ENCODE measurements at regions of chr2 and their contacts with region 1.

Region 1: DNA sequence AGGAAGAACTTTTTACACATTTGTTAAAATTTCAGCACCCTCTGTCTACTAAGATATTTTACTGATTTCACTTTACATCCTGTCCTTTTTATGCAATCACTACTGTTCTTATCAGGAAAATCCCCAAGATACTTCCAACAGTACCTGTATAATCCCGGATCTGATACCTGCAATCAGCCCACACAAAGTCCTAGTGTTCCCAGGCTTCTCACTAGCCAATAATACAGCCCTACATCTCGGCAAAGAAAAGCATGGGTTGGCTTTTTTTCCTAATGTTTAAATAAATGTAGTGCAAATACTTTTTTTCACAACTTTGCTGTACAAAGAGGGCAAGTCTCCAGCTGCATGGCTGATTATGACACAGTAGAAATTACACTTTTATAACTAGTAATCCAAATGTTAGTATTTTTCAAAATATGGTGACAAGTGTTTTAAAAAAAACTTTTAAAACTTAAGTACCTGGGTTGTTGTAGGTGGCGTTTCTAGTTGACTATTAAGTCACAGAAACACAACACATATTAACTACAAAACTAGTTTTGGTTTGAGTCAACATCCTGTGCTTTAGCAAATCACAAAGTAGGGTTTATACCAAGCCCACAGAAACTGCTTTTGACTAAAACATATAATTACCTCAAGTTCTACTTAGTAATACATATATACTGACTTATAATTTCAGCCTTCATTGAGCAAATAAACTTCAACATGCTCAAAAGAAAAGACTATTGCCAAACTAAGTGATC is 19.5 kb downstream of the CNOT11 start:
- DNase-seq: no peak
- ATAC-seq: no peak
- H3K4me3 ChIP-seq: no peak overlapping the region
- H3K27ac ChIP-seq: no peak overlapping the region
- H3K4me1 ChIP-seq: peaks cover 0 to 13% (median 4%) of the 10 kb centered on the region in 9 donors
- H3K27me3 ChIP-seq: no peaks in the 10 kb centered on the region
- CTCF ChIP-seq: no peak

Region 2: GRCh38 chr2:101252408-101253012 is 19.7 kb before region 1 on chr2 and contains the start of gene CNOT11:
- intact Hi-C with region 1: no loop called
- DNase-seq: peak; percentile 100
- ATAC-seq: peak; percentile 94 to 97 (median 96)
- H3K4me3 ChIP-seq: peak within 1 kb of the TSS; percentile 71 to 100 (median 95)
- H3K27ac ChIP-seq: peak within 1 kb of the TSS; percentile 67 to 99 (median 97)
- H3K4me1 ChIP-seq: peaks cover 2 to 42% (median 38%) of the 10 kb centered on the region in 9 donors
- H3K27me3 ChIP-seq: no peaks in the 10 kb centered on the region
- CTCF ChIP-seq: no peak
- total RNA-seq, gene CNOT11: 37.8 to 77.1 (median 45.8) TPM

Region 3: GRCh38 chr2:101551336-101551888 is 279.2 kb after region 1 on chr2:
- intact Hi-C with region 1: loop called in 1 of 10 experiments (anchors 5 kb)
- DNase-seq: no peak
- ATAC-seq: no peak
- H3K4me3 ChIP-seq: no peak overlapping the region
- H3K27ac ChIP-seq: no peak overlapping the region
- H3K4me1 ChIP-seq: peaks cover 0 to 13% (median 0%) of the 10 kb centered on the region in 9 donors
- H3K27me3 ChIP-seq: peaks cover 0 to 4% (median 0%) of the 10 kb centered on the region in 7 donors
- CTCF ChIP-seq: no peak

Region 4: GRCh38 chr2:101770726-101771125 is 498.5 kb after region 1 on chr2:
- intact Hi-C with region 1: no loop called
- DNase-seq: no peak
- ATAC-seq: peak in 3 of 8 donors; percentile 33 to 43 (median 38)
- H3K4me3 ChIP-seq: no peak overlapping the region
- H3K27ac ChIP-seq: peak overlapping the region in 5 of 10 donors; percentile 5 to 47 (median 22)
- H3K4me1 ChIP-seq: peaks cover 24 to 99% (median 92%) of the 10 kb centered on the region in 9 donors
- H3K27me3 ChIP-seq: no peaks in the 10 kb centered on the region
- CTCF ChIP-seq: peak in 6 of 9 donors; percentile 40 to 60 (median 46)